GM12878 (cell line): ENCODE measurements at regions of chr1 and their contacts with region 1.

Region 1: GRCh38 chr1:92924243-92924900 is 36.9 kb downstream of the DIPK1A start:
- DNase-seq: no peak
- ATAC-seq: no peak
- H3K4me3 ChIP-seq: no peak overlapping the region
- H3K27ac ChIP-seq: no peak overlapping the region
- H3K4me1 ChIP-seq: peaks cover 13% of the 10 kb centered on the region
- H3K27me3 ChIP-seq: no peaks in the 10 kb centered on the region
- CTCF ChIP-seq: no peak
- EP300 ChIP-seq: no peak
- POLR2A ChIP-seq: no peak
- RAD21 ChIP-seq: no peak

Region 2: GRCh38 chr1:92721886-92722285 is 202.5 kb before region 1 on chr1:
- CTCF ChIA-PET with region 1: no interaction called
- POLR2A ChIA-PET with region 1: no interaction called
- RAD21 ChIA-PET with region 1: no interaction called
- SMC1A ChIA-PET with region 1: no interaction called
- in situ Hi-C with region 1: no loop called
- intact Hi-C with region 1: no loop called
- DNase-seq: no peak
- ATAC-seq: no peak
- H3K4me3 ChIP-seq: no peak overlapping the region
- H3K27ac ChIP-seq: no peak overlapping the region
- H3K4me1 ChIP-seq: no peaks in the 10 kb centered on the region
- H3K27me3 ChIP-seq: no peaks in the 10 kb centered on the region
- CTCF ChIP-seq: no peak
- EP300 ChIP-seq: no peak
- POLR2A ChIP-seq: no peak
- RAD21 ChIP-seq: no peak

Region 3: DNA sequence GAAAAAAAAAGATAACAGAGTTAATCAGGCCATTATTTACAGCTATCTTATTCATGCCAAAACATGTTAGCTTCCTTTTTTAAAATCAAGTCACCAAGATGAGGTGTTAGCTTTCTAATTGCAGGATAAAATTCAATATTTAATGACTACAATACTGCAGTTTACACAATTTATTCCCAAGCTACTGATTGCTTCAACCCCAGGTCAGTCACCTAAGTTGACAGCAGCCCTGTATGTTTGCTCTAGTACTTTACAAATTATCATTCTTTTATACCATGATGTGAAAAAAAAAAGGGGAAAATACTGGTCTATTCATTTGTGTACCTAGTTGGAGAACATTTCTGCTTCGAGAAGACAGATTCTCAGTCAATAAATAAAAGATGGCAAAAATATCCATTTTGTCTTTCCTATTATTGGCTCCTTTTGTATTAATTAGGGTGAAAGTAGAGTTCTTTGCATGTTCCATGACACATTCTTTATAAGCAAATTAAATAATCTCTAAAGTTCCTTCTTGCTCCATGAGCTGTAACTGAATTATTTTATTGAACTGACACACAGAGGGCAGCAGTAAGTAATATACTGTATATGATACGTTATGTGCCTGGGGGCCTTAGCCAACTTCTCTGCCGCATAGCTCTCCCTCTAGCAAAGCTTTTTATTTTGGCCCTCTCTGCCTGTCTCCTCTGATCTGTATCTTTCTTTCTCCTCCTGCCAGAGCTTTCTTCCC is 11.1 kb before region 1 on chr1:
- CTCF ChIA-PET with region 1: interaction called, 6 read pairs
- POLR2A ChIA-PET with region 1: interaction called, 5 read pairs
- RAD21 ChIA-PET with region 1: no interaction called
- SMC1A ChIA-PET with region 1: interaction called, 20 read pairs
- in situ Hi-C with region 1: no loop called
- intact Hi-C with region 1: no loop called
- DNase-seq: no peak
- ATAC-seq: no peak
- H3K4me3 ChIP-seq: no peak overlapping the region
- H3K27ac ChIP-seq: no peak overlapping the region
- H3K4me1 ChIP-seq: no peaks in the 10 kb centered on the region
- H3K27me3 ChIP-seq: no peaks in the 10 kb centered on the region
- CTCF ChIP-seq: no peak
- EP300 ChIP-seq: no peak
- POLR2A ChIP-seq: no peak
- RAD21 ChIP-seq: no peak